ENCODE measurements at regions of chr10 and their contacts with region 1.

Region 1: DNA sequence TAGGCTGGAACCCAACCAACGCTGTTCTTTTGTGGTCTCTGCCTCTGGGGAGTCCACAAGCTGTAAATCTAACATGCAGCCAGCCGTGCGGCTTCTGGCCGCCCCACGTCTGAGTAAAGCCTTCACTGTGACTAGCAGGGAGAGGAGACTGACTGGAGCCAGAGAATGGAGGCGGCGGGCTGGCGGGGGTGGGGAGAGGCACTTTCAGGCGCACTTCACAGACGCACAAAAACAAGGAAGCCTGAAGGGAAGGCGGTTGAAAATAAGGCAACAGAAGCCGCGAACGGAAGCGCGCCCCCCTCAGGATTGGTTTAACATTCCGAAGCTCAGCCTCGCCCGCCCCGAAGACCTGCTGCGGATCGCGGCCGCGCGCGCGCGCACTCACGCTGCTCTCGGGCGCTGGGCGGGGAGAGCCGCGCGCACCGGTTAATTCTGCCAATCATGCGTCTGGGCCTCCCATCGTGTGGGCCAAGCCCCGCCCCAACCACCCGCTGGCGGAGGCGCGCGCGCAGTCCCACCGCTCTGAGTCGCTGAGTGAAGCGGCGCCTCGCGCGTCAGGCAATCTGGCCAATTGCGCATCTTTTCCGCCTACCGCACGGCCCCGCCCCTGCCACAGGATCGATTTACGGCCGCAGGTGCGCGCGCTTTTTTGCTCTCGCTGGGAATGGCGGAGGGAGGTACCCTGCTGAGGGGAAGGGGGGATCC is at the start of gene SFR1:
- DNase-seq: peak; percentile 100
- total RNA-seq, gene SFR1: 7.2 TPM

Region 2: GRCh38 chr10:103888113-103888841 is 233.4 kb before region 1 on chr10:
- intact Hi-C with region 1: loop called (anchors 5 kb)
- DNase-seq: peak; percentile 83

Region 3: DNA sequence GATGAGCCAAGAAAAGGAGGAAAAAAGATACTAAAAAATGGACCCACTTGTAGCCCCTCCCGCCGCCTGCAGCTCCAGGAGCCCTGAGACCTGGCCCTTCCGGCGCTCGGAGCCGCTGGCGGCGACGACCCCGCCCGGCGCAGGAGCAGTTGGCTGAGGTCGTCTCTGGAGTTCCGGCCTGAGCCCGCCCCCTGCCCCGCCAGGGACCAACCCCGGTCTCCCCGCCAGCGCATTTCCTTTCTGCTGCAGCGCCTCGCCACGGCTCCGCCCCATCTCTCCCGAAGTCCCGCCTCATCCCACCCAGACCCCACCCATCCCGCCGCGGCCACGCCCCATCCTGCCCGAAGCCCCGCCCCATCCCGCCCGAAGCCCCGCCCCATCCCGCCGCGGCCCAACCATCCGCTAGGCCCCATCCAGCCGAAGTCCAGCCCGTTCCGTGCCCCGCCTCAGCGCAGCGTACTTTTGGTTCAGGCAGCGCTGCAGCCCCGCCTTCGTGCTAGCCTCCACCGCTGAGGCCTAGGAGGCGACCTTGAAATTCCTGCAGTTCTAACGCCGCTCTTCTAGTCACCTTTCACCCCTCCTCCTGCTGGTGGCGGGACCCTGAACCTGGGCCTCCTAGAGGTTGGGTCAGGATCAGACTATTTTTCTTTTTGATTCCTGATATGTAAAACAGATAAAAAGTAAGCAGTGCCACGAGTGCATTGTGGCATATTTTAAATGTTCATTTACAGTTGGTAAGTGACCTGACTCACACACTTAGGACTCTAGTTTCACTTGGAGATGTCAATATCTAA is 203.4 kb before region 1 on chr10 and contains the start of gene STN1:
- intact Hi-C with region 1: loop called (anchors 2 kb)
- DNase-seq: peak; percentile 99
- total RNA-seq, gene STN1: 33.9 TPM

Region 4: DNA sequence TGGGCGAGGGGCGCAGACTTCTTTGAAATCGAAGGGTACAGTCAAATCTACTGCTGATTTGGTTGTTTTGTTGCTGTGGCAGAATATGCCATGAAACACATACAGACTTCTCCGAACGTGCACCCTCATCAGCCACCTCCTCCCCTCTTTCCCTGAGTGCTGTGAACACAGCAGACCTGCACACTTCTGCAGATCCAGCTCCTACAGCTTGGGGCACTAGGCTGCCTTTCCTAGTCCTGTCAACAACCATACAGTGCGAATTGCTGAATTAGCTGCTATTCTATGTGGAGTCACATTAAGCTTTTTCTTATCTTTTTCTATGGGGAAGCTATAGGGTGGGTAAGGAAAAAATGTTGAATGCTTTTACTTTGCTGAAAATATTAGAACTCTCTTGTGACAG is 93.5 kb before region 1 on chr10:
- intact Hi-C with region 1: loop called (anchors 5 kb)
- DNase-seq: no peak

Region 5: DNA sequence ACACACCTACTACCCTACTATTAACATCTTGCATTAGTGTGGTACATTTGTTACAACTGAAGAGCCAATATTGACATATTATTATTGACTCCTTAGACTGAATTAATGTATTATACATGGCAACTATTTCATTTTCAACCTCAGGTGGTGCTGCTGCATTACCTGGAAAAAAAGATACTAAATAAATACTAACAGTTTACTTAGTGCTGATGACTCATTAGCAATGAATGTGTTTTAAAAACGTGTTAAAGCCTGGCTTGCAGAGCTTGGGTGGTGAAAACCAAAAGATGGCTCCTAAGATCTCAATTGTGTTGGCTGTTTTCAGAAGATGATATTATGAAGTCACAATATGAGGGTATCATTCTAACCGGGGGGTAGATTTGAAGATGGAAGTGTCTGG is 75.7 kb after region 1 on chr10:
- intact Hi-C with region 1: no loop called
- DNase-seq: no peak

Region 6: GRCh38 chr10:104268716-104269645 is 147.3 kb after region 1 on chr10 and contains the start of gene GSTO2:
- intact Hi-C with region 1: loop called (anchors 10 kb)
- DNase-seq: peak; percentile 99
- total RNA-seq, gene GSTO2: 0.67 TPM

Measured in cardiac septum (tissue), 1 donor.